ENCODE measurements at regions of chr12 and their contacts with region 1.

Region 1: DNA sequence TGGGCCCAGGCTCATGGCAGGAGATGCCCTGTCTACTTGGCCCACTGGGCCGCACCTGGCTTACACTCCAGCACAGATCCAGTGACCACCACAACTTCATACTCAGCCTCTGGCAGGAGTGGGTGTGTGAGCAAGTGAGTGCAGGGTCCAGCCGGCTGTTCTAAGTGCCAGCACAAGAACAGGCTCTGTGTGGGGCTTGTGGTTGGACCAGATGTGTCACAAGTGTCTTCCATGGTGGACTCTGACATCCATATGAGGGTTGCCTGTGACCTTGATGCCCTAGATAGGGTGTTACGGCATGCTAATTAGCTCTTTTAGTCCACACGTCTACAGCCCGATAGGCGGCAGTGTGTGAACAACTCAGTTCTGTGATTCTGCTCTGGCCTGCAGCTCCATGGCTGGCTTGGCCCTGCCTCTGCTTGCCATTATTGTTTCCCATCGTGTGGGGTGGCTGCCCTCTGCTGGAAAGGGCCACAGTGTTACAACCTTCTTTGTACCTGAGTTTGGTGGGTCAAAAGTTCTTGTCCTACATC is 1089.1 kb downstream of the SLC6A15 start:
- DNase-seq: peak; percentile 13 to 43
- ATAC-seq: peak in 6 of 8 donors; percentile 57 to 82 (median 63)
- H3K4me3 ChIP-seq: no peak overlapping the region
- H3K27ac ChIP-seq: no peak overlapping the region
- H3K4me1 ChIP-seq: no peaks in the 10 kb centered on the region
- H3K27me3 ChIP-seq: no peaks in the 10 kb centered on the region
- CTCF ChIP-seq: peak in 8 of 9 donors; percentile 15 to 58 (median 46)

Region 2: GRCh38 chr12:83005534-83006197 is 817.8 kb before region 1 on chr12:
- intact Hi-C with region 1: loop called in 1 of 10 experiments (anchors 5 kb)
- DNase-seq: no peak
- ATAC-seq: no peak
- H3K4me3 ChIP-seq: no peak overlapping the region
- H3K27ac ChIP-seq: no peak overlapping the region
- H3K4me1 ChIP-seq: peaks cover 0 to 4% (median 0%) of the 10 kb centered on the region in 9 donors
- H3K27me3 ChIP-seq: no peaks in the 10 kb centered on the region
- CTCF ChIP-seq: no peak

Region 3: GRCh38 chr12:83462419-83462818 is 361.1 kb before region 1 on chr12:
- intact Hi-C with region 1: loop called in 1 of 10 experiments (anchors 10 kb)
- DNase-seq: no peak
- ATAC-seq: peak in 1 of 8 donors; percentile 35
- H3K4me3 ChIP-seq: no peak overlapping the region
- H3K27ac ChIP-seq: no peak overlapping the region
- H3K4me1 ChIP-seq: peaks cover 0 to 3% (median 0%) of the 10 kb centered on the region in 9 donors
- H3K27me3 ChIP-seq: no peaks in the 10 kb centered on the region
- CTCF ChIP-seq: no peak

Region 4: DNA sequence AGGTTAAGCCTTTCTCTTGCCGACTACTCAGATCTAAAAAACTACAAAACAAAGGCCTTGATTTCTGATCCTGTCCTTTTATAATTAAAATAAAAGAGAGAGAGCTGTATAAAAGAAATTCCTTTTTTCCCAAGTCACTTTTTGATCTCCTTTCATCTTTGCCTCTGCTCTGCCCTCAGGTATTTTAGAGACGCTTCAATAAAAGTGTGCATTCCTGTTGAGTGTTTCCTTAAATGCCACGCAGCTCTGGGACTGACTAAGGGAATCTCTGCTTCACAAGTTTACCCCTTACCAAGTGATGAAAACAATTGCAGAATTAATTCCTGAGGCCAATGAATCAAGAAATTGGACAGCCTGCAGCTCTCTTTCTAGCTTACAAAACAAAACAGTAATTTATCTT is 27.0 kb before region 1 on chr12:
- intact Hi-C with region 1: no loop called
- DNase-seq: no peak
- ATAC-seq: no peak
- H3K4me3 ChIP-seq: no peak overlapping the region
- H3K27ac ChIP-seq: no peak overlapping the region
- H3K4me1 ChIP-seq: no peaks in the 10 kb centered on the region
- H3K27me3 ChIP-seq: no peaks in the 10 kb centered on the region
- CTCF ChIP-seq: no peak

Region 5: DNA sequence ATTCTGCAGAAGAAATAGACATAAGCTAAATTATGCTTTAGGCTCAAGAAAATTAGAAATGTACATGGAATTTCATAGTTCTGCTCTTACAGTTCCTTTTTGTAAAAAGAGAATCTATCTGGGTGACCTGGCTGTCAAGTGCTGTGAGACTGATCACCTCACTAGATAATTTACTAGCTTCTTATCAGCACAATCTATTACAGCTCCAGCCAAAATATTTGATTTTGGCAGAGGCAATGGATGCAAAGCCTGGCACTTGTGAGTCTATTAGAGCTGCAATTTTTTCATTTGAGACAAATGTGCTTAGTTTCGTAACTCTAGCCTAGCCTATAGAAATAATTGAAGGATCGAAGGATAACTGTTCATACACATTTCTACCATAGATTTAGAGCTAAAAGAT is 161.6 kb after region 1 on chr12:
- intact Hi-C with region 1: no loop called
- DNase-seq: no peak
- ATAC-seq: no peak
- H3K4me3 ChIP-seq: no peak overlapping the region
- H3K27ac ChIP-seq: no peak overlapping the region
- H3K4me1 ChIP-seq: no peaks in the 10 kb centered on the region
- H3K27me3 ChIP-seq: no peaks in the 10 kb centered on the region
- CTCF ChIP-seq: no peak

Region 6: DNA sequence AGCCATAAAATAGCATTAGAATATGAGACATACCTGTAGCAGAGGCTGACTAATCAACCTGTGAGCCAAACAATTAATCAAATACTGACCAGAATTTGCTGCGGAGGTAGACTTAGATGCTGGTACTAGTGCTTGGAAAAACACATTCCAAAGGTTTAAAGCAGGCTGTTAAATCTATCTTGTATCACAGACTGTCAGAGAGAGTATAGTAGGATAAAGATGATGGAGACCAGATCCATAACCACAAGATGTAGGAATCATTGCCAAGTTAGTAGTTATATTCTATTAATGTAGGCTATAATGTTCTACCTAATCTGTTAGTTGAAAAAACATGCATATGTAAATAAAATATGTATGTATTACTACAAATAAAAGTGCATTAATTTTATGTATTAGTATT is 362.9 kb after region 1 on chr12:
- intact Hi-C with region 1: no loop called
- DNase-seq: no peak
- ATAC-seq: no peak
- H3K4me3 ChIP-seq: no peak overlapping the region
- H3K27ac ChIP-seq: no peak overlapping the region
- H3K4me1 ChIP-seq: no peaks in the 10 kb centered on the region
- H3K27me3 ChIP-seq: no peaks in the 10 kb centered on the region
- CTCF ChIP-seq: no peak